ENCODE measurements at regions of chr7 and their contacts with region 1.

Region 1: DNA sequence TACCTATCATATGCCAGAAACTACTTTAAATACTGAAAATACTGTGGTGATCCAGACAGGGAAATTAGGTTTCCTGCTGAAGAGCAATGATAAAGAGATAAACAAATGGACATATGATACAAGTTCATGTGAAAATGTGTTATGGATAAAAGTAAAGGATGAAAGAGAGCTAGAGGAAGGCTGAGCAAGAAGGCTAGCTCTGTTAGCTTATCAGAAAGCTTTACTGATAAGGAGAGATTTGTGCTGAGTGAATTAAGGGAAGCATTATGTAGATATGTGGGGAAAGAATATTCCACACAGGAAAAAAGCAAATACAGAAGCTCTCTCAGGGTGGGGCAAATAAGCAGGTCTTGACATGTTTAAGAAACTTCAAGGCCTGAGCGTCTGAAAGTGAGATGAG is 308.4 kb downstream of the HDAC9 start:
- DNase-seq: no peak
- H3K4me3 ChIP-seq: no peak overlapping the region
- H3K27ac ChIP-seq: no peak overlapping the region
- H3K4me1 ChIP-seq: no peaks in the 10 kb centered on the region
- H3K27me3 ChIP-seq: no peaks in the 10 kb centered on the region
- CTCF ChIP-seq: no peak
- EP300 ChIP-seq: no peak
- POLR2A ChIP-seq: no peak

Region 2: GRCh38 chr7:18788026-18788425 is 15.9 kb before region 1 on chr7:
- in situ Hi-C with region 1: no loop called
- intact Hi-C with region 1: loop called (anchors 1 kb)
- DNase-seq: no peak
- H3K4me3 ChIP-seq: no peak overlapping the region
- H3K27ac ChIP-seq: no peak overlapping the region
- H3K4me1 ChIP-seq: no peaks in the 10 kb centered on the region
- H3K27me3 ChIP-seq: no peaks in the 10 kb centered on the region
- CTCF ChIP-seq: no peak
- EP300 ChIP-seq: no peak
- POLR2A ChIP-seq: no peak

Measured in transverse colon (tissue), 4 donors.